CD8-positive, alpha-beta T cell (primary cell): ENCODE measurements at regions of chr2 and their contacts with region 1.

Region 1: GRCh38 chr2:64551851-64552250 is 27.7 kb downstream of the AFTPH start:
- DNase-seq: no peak
- ATAC-seq: no peak
- H3K4me3 ChIP-seq: no peak overlapping the region
- H3K4me3 Mint-ChIP-seq: no peak overlapping the region
- H3K27ac ChIP-seq: no peak overlapping the region
- H3K27ac Mint-ChIP-seq: no peak overlapping the region
- H3K4me1 ChIP-seq: no peaks in the 10 kb centered on the region
- H3K4me1 Mint-ChIP-seq: peaks cover 12% of the 10 kb centered on the region
- H3K27me3 ChIP-seq: no peaks in the 10 kb centered on the region
- H3K27me3 Mint-ChIP-seq: no peaks in the 10 kb centered on the region
- CTCF ChIP-seq: no peak

Region 2: DNA sequence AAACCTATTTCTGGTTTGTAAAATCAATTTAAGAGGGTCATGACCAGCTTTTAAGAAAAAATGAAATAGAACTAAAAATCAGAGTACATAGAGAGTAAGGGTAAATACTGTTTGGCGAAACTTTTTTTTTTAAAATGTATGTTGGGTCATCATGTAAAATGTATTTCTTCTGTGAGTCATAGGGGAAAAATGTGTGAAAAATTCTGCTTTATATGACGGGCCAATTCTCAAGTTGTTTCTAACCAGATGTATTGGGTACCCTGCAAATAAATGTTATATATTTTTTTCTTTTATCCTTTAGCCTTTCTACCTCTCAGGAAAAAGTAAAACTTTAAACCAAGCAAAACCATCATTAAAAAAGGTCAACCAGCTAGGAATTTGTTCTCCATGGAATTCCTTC is 13.9 kb before region 1 on chr2:
- CTCF ChIA-PET with region 1: no interaction called
- POLR2A ChIA-PET with region 1: no interaction called
- intact Hi-C with region 1: loop called (anchors 2 kb)
- DNase-seq: no peak
- ATAC-seq: no peak
- H3K4me3 ChIP-seq: no peak overlapping the region
- H3K4me3 Mint-ChIP-seq: no peak overlapping the region
- H3K27ac ChIP-seq: no peak overlapping the region
- H3K27ac Mint-ChIP-seq: no peak overlapping the region
- H3K4me1 ChIP-seq: peaks cover 11% of the 10 kb centered on the region
- H3K4me1 Mint-ChIP-seq: peaks cover 58% of the 10 kb centered on the region
- H3K27me3 ChIP-seq: no peaks in the 10 kb centered on the region
- H3K27me3 Mint-ChIP-seq: no peaks in the 10 kb centered on the region
- CTCF ChIP-seq: no peak